Mammary epithelial cell (primary cell): ENCODE measurements at regions of chr10 and their contacts with region 1.

Region 1: DNA sequence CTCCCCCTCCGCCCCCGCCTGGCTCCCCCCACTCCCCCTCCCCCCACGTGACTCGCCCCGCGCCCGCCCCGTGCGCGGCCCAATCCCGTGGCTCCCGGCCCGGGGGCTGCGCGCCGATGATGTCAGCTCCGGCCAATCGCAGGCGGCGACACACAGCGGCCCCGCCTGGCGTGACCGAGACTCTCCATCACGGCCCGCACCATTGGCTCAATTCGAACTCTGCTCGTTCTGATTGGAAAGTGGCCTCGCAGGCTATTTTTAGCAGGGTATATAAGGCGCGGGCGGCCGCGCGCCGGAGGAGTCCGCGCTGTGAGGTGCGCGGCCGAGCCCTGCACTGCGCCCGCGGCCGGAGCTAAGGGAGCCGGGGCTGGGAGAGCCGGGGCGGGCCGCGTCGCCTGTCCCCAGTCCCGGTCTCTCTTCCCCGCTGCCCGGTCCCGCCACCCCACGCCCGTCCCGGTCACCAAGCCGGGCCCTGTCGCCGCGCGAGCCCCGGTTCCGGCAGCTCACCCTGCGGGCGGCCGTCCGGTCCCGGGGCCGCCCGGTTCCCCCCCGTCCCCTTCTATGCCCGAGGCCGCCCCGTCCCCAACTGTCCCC is 345 bp upstream of the KLF6 start:
- DNase-seq: peak; percentile 97
- H3K4me3 ChIP-seq: peak overlapping the region; percentile 51 to 93 (median 78)
- H3K27ac ChIP-seq: peak overlapping the region; percentile 97
- H3K4me1 ChIP-seq: peaks cover 24% of the 10 kb centered on the region
- H3K27me3 ChIP-seq: no peaks in the 10 kb centered on the region
- CTCF ChIP-seq: no peak

Region 2: GRCh38 chr10:3281941-3282673 is 503.2 kb before region 1 on chr10:
- CTCF ChIA-PET with region 1: no interaction called
- dilution Hi-C with region 1: no loop called
- in situ Hi-C with region 1: no loop called
- intact Hi-C with region 1: no loop called
- DNase-seq: no peak
- H3K4me3 ChIP-seq: no peak overlapping the region
- H3K27ac ChIP-seq: no peak overlapping the region
- H3K4me1 ChIP-seq: no peaks in the 10 kb centered on the region
- H3K27me3 ChIP-seq: no peaks in the 10 kb centered on the region
- CTCF ChIP-seq: no peak

Region 3: GRCh38 chr10:3852147-3852904 is 67.0 kb after region 1 on chr10:
- CTCF ChIA-PET with region 1: no interaction called
- dilution Hi-C with region 1: loop called (anchors 5 kb)
- in situ Hi-C with region 1: loop called in 1 of 2 experiments (anchors 5 kb)
- intact Hi-C with region 1: loop called (anchors 1 kb)
- DNase-seq: peak; percentile 100
- H3K4me3 ChIP-seq: no peak overlapping the region
- H3K27ac ChIP-seq: peak overlapping the region; percentile 99
- H3K4me1 ChIP-seq: peaks cover 39% of the 10 kb centered on the region
- H3K27me3 ChIP-seq: no peaks in the 10 kb centered on the region
- CTCF ChIP-seq: no peak

Region 4: GRCh38 chr10:3911713-3912442 is 126.5 kb after region 1 on chr10:
- CTCF ChIA-PET with region 1: no interaction called
- dilution Hi-C with region 1: no loop called
- in situ Hi-C with region 1: no loop called
- intact Hi-C with region 1: loop called (anchors 1 kb)
- DNase-seq: peak; percentile 85
- H3K4me3 ChIP-seq: peak overlapping the region; percentile 25 to 38 (median 32)
- H3K27ac ChIP-seq: peak overlapping the region; percentile 93
- H3K4me1 ChIP-seq: peaks cover 14% of the 10 kb centered on the region
- H3K27me3 ChIP-seq: no peaks in the 10 kb centered on the region
- CTCF ChIP-seq: no peak

Region 5: DNA sequence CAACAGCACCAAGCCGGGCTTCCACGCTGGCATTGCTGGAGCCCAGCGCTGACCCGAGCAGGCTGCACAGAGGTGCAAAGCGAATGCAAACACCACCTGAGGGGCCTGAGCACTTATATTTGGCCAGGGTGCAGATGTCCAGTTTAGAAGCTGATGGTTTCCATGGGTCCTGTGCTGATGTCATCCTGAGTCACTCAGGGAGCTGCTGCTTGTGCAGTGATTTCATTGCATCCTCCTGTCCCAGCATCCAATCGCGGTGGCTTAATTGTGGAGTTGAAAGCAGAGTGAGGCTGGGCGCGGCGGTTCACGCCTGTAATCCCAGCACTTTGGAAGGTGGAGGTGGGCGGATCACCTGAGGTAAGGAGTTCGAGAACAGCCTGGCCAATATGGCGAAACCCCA is 409.9 kb after region 1 on chr10:
- CTCF ChIA-PET with region 1: no interaction called
- dilution Hi-C with region 1: no loop called
- in situ Hi-C with region 1: no loop called
- intact Hi-C with region 1: loop called (anchors 5 kb)
- DNase-seq: peak; percentile 70
- H3K4me3 ChIP-seq: no peak overlapping the region
- H3K27ac ChIP-seq: no peak overlapping the region
- H3K4me1 ChIP-seq: peaks cover 8% of the 10 kb centered on the region
- H3K27me3 ChIP-seq: no peaks in the 10 kb centered on the region
- CTCF ChIP-seq: no peak

Region 6: DNA sequence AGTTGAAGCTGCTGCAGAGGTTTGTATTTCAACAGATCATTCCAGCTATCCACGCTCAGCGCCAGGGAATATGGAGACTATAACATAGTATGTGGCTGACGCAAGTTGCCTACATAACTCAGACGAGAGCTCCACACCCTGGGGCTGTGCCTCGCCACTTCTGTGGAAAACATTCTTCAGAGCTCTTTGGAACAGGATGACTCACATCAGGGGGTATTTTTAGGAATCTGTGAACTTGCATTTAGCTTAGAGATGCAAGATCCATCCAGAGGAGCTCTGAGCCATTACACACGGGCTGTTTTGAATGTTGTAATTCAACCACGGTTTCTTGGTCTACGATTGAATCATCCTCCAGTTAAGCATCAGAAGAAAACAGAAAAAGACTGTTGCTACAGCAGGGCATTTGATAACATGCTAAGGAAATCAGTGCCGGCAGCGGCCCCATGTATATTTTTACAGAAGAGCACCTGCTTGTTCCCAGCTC is 559.2 kb after region 1 on chr10:
- CTCF ChIA-PET with region 1: no interaction called
- dilution Hi-C with region 1: no loop called
- in situ Hi-C with region 1: loop called in 1 of 2 experiments (anchors 10 kb)
- intact Hi-C with region 1: loop called (anchors 1 kb)
- DNase-seq: peak; percentile 99
- H3K4me3 ChIP-seq: no peak overlapping the region
- H3K27ac ChIP-seq: peak overlapping the region; percentile 90
- H3K4me1 ChIP-seq: peaks cover 16% of the 10 kb centered on the region
- H3K27me3 ChIP-seq: no peaks in the 10 kb centered on the region
- CTCF ChIP-seq: no peak

Region 7: GRCh38 chr10:4532467-4532866 is 747.1 kb after region 1 on chr10:
- CTCF ChIA-PET with region 1: no interaction called
- dilution Hi-C with region 1: no loop called
- in situ Hi-C with region 1: no loop called
- intact Hi-C with region 1: loop called (anchors 5 kb)
- DNase-seq: peak; percentile 46
- H3K4me3 ChIP-seq: no peak overlapping the region
- H3K27ac ChIP-seq: peak overlapping the region; percentile 91
- H3K4me1 ChIP-seq: peaks cover 21% of the 10 kb centered on the region
- H3K27me3 ChIP-seq: no peaks in the 10 kb centered on the region
- CTCF ChIP-seq: no peak

Region 8: GRCh38 chr10:4678023-4678950 is 892.9 kb after region 1 on chr10:
- CTCF ChIA-PET with region 1: no interaction called
- dilution Hi-C with region 1: no loop called
- in situ Hi-C with region 1: loop called (anchors 10 to 25 kb)
- intact Hi-C with region 1: no loop called
- DNase-seq: peak; percentile 94
- H3K4me3 ChIP-seq: peak overlapping the region in 2 of 3 experiments; percentile 46 to 61
- H3K27ac ChIP-seq: peak overlapping the region; percentile 100
- H3K4me1 ChIP-seq: peaks cover 43% of the 10 kb centered on the region
- H3K27me3 ChIP-seq: no peaks in the 10 kb centered on the region
- CTCF ChIP-seq: no peak